ENCODE measurements at regions of chr2 and their contacts with region 1.

Region 1: DNA sequence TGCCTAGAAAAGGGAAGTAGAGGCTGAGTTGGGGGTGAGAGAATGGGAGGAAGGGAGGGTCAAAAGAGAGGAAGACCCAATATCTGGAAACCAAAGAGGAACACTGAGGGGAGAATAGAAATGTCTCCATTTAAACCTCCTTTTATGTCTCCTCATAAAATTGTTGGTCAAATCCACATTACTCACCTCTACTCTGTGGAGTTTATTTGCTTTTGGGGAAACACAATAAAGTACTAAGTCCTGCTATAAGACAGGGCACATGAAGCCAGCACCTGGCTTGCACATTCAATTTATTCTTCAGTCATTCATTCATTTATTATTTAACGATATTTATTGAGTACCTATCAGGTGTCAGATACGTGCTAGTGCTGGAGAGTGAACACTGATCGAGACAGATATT is 60.3 kb upstream of the NFE2L2 start:
- DNase-seq: peak; percentile 36
- ATAC-seq: peak; percentile 93
- H3K4me3 ChIP-seq: no peak overlapping the region
- H3K27ac ChIP-seq: no peak overlapping the region
- H3K4me1 ChIP-seq: 0 out of 2 replicates have a peak, but pooled peaks cover 4% of the 10 kb centered on the region
- H3K27me3 ChIP-seq: no peaks in the 10 kb centered on the region
- CTCF ChIP-seq: no peak

Region 2: GRCh38 chr2:177258059-177258458 is 66.7 kb before region 1 on chr2:
- CTCF ChIA-PET with region 1: no interaction called
- POLR2A ChIA-PET with region 1: no interaction called
- intact Hi-C with region 1: no loop called
- DNase-seq: no peak
- ATAC-seq: no peak
- H3K4me3 ChIP-seq: no peak overlapping the region
- H3K27ac ChIP-seq: no peak overlapping the region
- H3K4me1 ChIP-seq: peaks cover 20% of the 10 kb centered on the region
- H3K27me3 ChIP-seq: no peaks in the 10 kb centered on the region
- CTCF ChIP-seq: no peak

Region 3: DNA sequence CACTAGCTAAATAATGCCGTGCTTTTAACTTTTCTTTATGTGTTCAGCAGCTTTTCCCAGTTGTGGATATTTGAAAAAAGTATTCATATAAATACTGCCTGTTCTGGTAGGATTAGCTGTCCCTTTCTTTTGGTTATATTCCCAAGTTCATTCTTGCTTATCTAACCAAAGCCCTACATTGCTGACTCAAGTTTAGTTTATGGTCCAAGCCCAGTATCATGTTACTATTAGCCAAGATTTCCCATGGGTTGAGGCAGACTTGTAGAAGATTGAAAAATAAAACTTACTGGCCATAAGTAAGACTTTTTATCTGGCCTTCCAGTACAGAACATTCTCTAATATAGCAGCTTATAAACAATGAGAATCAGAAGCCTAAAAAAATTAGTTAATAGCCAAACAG is 10.6 kb before region 1 on chr2:
- CTCF ChIA-PET with region 1: no interaction called
- POLR2A ChIA-PET with region 1: no interaction called
- intact Hi-C with region 1: loop called (anchors 1 kb)
- DNase-seq: peak; percentile 52
- ATAC-seq: peak; percentile 97
- H3K4me3 ChIP-seq: no peak overlapping the region
- H3K27ac ChIP-seq: no peak overlapping the region
- H3K4me1 ChIP-seq: peaks cover 8% of the 10 kb centered on the region
- H3K27me3 ChIP-seq: no peaks in the 10 kb centered on the region
- CTCF ChIP-seq: no peak